BJ (cell line): ENCODE measurements at regions of chr16 and their contacts with region 1.

Region 1: GRCh38 chr16:8878521-8878911 is 3.6 kb upstream of the LITAFD start:
- DNase-seq: peak; percentile 53
- H3K4me3 ChIP-seq: no peak overlapping the region
- H3K27me3 ChIP-seq: no peaks in the 10 kb centered on the region
- CTCF ChIP-seq: no peak

Region 2: DNA sequence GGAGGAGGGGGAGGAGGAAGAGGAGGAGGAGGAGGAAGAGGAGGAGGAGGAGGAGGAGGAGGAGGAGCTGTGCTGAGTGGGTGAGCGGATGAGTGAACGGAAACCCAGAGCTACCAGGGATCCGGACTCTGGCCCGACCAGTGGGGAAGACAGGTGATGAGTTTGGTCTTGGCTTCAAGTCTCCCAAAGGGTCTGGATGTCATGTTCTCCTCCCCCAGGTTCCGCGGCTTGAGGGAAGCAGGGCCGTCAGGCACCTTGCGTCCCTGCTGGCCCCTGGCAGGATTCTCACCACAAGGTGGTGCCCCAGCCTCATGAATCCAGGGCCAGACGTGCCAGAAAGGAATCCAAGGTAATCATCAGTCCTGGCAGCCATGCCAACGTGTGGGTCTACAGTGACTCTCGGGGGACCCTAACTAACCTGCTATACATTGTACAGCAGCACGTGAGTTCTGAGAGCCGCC is 217.6 kb before region 1 on chr16:
- CTCF ChIA-PET with region 1: interaction called, 25 read pairs
- POLR2A ChIA-PET with region 1: no interaction called
- DNase-seq: no peak
- H3K4me3 ChIP-seq: no peak overlapping the region
- H3K27me3 ChIP-seq: no peaks in the 10 kb centered on the region; the same call in 1 of the 2 replicates
- CTCF ChIP-seq: peak; percentile 73

Region 3: GRCh38 chr16:8797364-8798173 is 80.9 kb before region 1 on chr16 and contains the starts of genes PMM2 and TMEM186:
- CTCF ChIA-PET with region 1: interaction called, 14 read pairs
- POLR2A ChIA-PET with region 1: no interaction called
- DNase-seq: peak; percentile 90
- H3K4me3 ChIP-seq: peak within 1 kb of the TSS; percentile 74
- H3K27me3 ChIP-seq: no peaks in the 10 kb centered on the region
- CTCF ChIP-seq: no peak
- polyA plus RNA-seq, gene PMM2: 30.4 and 32.2 TPM in 2 replicates
- polyA plus RNA-seq, gene TMEM186: 5.9 and 7.9 TPM in 2 replicates

Region 4: GRCh38 chr16:8850279-8850885 is 28.1 kb before region 1 on chr16:
- CTCF ChIA-PET with region 1: interaction called, 20 read pairs
- POLR2A ChIA-PET with region 1: no interaction called
- DNase-seq: peak; percentile 31
- H3K4me3 ChIP-seq: no peak overlapping the region
- H3K27me3 ChIP-seq: no peaks in the 10 kb centered on the region
- CTCF ChIP-seq: no peak

Region 5: GRCh38 chr16:8859899-8860881 is 18.3 kb before region 1 on chr16:
- CTCF ChIA-PET with region 1: interaction called, 24 read pairs
- POLR2A ChIA-PET with region 1: no interaction called
- DNase-seq: no peak
- H3K4me3 ChIP-seq: no peak overlapping the region
- H3K27me3 ChIP-seq: no peaks in the 10 kb centered on the region
- CTCF ChIP-seq: no peak

Region 6: GRCh38 chr16:8867216-8867931 is 11.1 kb before region 1 on chr16:
- CTCF ChIA-PET with region 1: interaction called, 24 read pairs
- POLR2A ChIA-PET with region 1: interaction called, 3 read pairs
- DNase-seq: no peak
- H3K4me3 ChIP-seq: peak overlapping the region; percentile 76
- H3K27me3 ChIP-seq: no peaks in the 10 kb centered on the region
- CTCF ChIP-seq: no peak

Region 7: DNA sequence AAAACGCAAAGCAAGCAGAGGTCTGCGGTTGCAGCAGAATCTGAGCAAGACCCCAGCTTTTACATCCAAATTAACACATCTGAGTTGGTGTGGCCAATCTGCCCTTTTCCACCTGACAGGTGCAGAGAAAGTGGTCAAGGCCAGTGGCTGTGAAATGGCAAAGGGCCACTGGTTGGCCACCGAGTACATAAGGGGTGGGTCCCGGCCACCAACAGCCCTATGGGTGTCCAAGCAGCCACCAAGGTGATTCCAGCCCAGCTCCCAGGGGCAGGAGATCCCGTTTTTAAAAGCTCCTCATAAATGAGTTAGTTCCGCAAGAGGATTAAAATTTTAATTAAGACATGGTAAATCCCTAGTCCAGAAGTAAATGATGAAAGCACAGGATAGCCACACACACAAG is 56.1 kb after region 1 on chr16:
- CTCF ChIA-PET with region 1: no interaction called
- POLR2A ChIA-PET with region 1: no interaction called
- DNase-seq: no peak
- H3K4me3 ChIP-seq: no peak overlapping the region
- H3K27me3 ChIP-seq: no peaks in the 10 kb centered on the region
- CTCF ChIP-seq: no peak